Right ventricle myocardium inferior (tissue), 1 donor: ENCODE measurements at regions of chr6 and their contacts with region 1.

Region 1: GRCh38 chr6:31958741-31959739 is at the starts of genes NELFE and SKIC2:
- DNase-seq: peak; percentile 98
- ATAC-seq: peak; percentile 99
- total RNA-seq, gene NELFE: 41.9 TPM
- total RNA-seq, gene SKIC2: 30.7 TPM

Region 2: GRCh38 chr6:31901953-31902643 is 56.9 kb before region 1 on chr6 and contains the start of gene ZBTB12:
- intact Hi-C with region 1: loop called (anchors 5 kb)
- DNase-seq: peak; percentile 93
- ATAC-seq: peak; percentile 85
- total RNA-seq, gene ZBTB12: 3.2 TPM

Region 3: DNA sequence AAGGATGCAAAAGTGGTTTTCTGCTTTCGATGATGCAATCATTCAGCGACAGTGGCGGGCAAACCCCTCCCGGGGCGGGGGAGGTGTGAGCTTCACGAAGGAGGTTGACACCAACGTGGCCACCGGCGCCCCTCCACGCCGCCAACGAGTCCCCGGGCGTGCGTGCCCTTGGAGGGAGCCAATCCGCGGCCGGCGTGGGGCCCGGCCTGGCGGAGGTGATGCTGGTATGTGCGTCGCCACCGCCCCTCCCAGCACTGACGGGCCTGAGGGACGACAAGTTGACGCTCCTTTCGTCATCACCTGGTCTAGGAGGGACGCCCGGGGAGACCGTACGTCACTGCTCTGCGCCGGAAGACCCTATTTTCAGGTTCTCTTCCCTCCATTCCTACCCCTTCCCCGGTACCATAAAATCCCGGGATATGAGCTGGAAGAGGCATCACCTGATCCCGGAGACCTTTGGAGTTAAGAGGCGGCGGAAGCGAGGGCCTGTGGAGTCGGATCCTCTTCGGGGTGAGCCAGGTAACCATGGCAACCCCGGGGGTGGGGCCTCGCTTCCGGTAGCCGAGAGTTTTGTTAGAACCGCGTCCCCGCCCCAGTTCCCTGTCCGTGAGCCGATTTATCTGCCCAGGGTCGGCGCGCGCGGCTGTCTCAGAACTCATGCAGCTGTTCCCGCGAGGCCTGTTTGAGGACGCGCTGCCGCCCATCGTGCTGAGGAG is 13.1 kb after region 1 on chr6 and contains the start of gene DXO:
- intact Hi-C with region 1: loop called (anchors 1 kb)
- DNase-seq: peak; percentile 98
- ATAC-seq: peak; percentile 96
- total RNA-seq, gene DXO: 9.8 TPM